PC-3 (cell line): ENCODE measurements at regions of chr7 and their contacts with region 1.

Region 1: GRCh38 chr7:111741811-111742240 is 179.5 kb upstream of the IMMP2L start:
- DNase-seq: peak; percentile 78
- ATAC-seq: peak; percentile 86
- H3K4me3 ChIP-seq: no peak overlapping the region
- H3K27ac ChIP-seq: no peak overlapping the region
- H3K4me1 ChIP-seq: peaks cover under 1% of the 10 kb centered on the region; the same call in 1 of the 2 replicates
- H3K27me3 ChIP-seq: no peaks in the 10 kb centered on the region
- CTCF ChIP-seq: peak; percentile 81

Region 2: GRCh38 chr7:111763221-111763801 is 21.5 kb after region 1 on chr7:
- CTCF ChIA-PET with region 1: no interaction called
- POLR2A ChIA-PET with region 1: no interaction called
- intact Hi-C with region 1: loop called (anchors 1 kb)
- DNase-seq: peak; percentile 55
- ATAC-seq: peak; percentile 84
- H3K4me3 ChIP-seq: no peak overlapping the region
- H3K27ac ChIP-seq: no peak overlapping the region
- H3K4me1 ChIP-seq: peaks cover 6% of the 10 kb centered on the region
- H3K27me3 ChIP-seq: no peaks in the 10 kb centered on the region
- CTCF ChIP-seq: peak; percentile 71